Common myeloid progenitor, CD34-positive (primary cell): ENCODE measurements at regions of chr15 and their contacts with region 1.

Region 1: DNA sequence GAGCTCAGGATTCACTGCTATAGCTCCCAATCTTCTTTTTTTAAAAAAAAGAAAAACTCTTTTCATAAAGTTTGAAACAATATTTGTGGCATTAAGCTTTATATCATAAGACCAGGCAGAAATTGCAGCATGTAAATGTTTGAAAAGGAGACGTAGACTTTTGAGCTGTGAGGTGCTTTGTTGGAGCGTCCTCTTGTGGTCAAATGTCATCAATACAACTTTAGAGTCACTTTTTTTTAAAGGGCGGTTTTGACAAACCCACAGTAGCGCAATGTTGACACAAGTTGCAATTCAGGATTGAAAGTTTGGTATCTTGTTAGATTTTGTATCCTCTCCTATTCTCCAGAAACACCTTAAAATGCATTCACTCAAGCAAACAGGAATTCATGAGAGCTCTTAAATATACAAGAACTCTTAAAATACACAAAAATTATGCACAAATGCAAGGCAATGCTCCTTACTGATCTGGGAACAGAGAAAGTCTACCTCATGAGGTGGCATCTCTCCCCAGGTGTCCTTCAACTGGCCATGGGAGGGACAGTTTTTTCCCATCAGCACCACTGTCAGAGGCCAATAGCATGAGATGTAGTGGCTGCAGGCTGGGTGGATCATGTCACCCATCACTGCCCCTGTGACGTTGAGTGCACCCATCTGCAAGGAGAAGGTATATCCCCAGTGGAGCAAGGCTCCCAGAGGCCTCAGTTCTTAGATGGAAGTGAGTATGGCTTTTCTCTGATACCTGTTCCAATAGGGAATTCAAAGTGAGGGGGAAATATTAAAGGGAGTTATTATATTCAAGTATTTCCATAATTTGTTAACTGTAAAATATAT is 70.7 kb downstream of the ANXA2 start:
- DNase-seq: peak; percentile 60 to 83 (median 72)
- H3K4me3 ChIP-seq: no peak overlapping the region
- H3K27ac ChIP-seq: no peak overlapping the region
- H3K4me1 ChIP-seq: no peaks in the 10 kb centered on the region
- H3K27me3 ChIP-seq: peaks cover 0 to 8% (median 6%) of the 10 kb centered on the region in 5 experiments

Region 2: GRCh38 chr15:59688841-59689625 is 638.0 kb before region 1 on chr15 and contains the start of gene BNIP2:
- CTCF ChIA-PET with region 1: interaction called, 33 read pairs
- POLR2A ChIA-PET with region 1: no interaction called
- DNase-seq: peak; percentile 99 to 100 (median 100)
- H3K4me3 ChIP-seq: peak within 1 kb of the TSS; percentile 74 to 100 (median 90)
- H3K27ac ChIP-seq: peak within 1 kb of the TSS; percentile 97 to 99
- H3K4me1 ChIP-seq: peaks cover 36 to 55% (median 49%) of the 10 kb centered on the region in 4 experiments
- H3K27me3 ChIP-seq: no peaks in the 10 kb centered on the region

Region 3: DNA sequence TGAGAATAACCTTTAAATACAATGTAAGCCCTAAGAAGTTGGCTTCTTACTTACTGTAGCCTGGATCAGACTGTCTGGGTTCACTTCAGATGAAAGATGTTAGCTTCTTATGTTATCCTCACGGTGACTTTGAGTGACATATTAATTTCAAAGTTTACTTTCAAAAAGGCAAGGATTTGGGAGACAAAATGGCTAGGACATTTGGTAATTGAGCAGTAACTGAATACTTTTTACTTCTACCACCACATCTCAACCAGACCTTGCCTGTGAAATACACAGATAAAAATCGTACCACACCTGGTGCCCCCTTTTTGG is 601.9 kb before region 1 on chr15:
- CTCF ChIA-PET with region 1: interaction called, 18 read pairs
- POLR2A ChIA-PET with region 1: no interaction called
- DNase-seq: no peak
- H3K4me3 ChIP-seq: no peak overlapping the region
- H3K27ac ChIP-seq: no peak overlapping the region
- H3K4me1 ChIP-seq: no peaks in the 10 kb centered on the region
- H3K27me3 ChIP-seq: peaks cover 0 to 4% (median 0%) of the 10 kb centered on the region in 5 experiments

Region 4: DNA sequence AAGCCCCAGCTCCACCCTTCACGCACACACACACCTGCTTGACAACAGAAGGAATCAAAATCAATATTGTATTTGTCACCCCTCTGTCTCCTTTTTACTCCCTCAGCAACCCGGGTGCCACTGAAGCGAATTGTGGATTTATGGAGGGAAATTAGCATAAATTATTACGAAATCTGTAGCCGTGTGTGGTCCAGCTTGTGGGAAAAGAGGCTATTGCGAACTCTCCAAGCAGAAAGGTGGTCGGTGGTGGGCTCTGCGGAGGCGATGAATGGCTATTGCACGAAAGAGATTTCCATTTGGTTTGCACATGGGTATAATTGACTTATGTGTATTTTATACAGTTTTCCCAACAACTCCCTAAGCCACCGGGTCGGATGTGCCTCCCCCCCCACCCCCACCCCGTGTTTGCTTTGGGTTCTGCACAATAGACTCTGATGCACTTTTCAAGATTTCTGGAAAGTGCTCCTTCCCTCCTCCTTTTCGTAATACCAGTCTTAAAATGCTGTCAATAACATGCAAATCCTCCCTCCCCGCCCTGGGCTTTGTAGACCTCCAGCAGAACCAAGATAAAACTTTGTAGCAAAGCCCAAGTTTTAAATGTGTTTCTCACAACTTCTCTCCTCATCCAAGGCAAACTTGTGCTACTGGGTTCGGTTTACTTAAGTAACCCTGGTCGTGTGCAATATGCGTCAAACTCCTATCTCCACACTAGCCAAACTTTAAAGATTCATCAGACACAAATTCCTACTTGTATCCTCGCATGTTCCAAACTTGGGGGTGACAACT is 326.0 kb before region 1 on chr15:
- CTCF ChIA-PET with region 1: no interaction called
- POLR2A ChIA-PET with region 1: no interaction called
- DNase-seq: peak in 1 of 3 donors; percentile 48
- H3K4me3 ChIP-seq: no peak overlapping the region
- H3K27ac ChIP-seq: no peak overlapping the region
- H3K4me1 ChIP-seq: peaks cover 0 to 47% (median 36%) of the 10 kb centered on the region in 4 experiments
- H3K27me3 ChIP-seq: peaks cover 15 to 99% (median 75%) of the 10 kb centered on the region in 5 experiments

Region 5: GRCh38 chr15:60315878-60316277 is 11.2 kb before region 1 on chr15:
- CTCF ChIA-PET with region 1: interaction called, 17 read pairs
- POLR2A ChIA-PET with region 1: no interaction called
- DNase-seq: no peak
- H3K4me3 ChIP-seq: no peak overlapping the region
- H3K27ac ChIP-seq: no peak overlapping the region
- H3K4me1 ChIP-seq: peaks cover 0 to 4% (median 0%) of the 10 kb centered on the region in 4 experiments
- H3K27me3 ChIP-seq: no peaks in the 10 kb centered on the region